Testis (tissue), 5 donors: ENCODE measurements at regions of chr7 and their contacts with region 1.

Region 1: GRCh38 chr7:35983626-35984025 is 169.4 kb upstream of the EEPD1 start:
- DNase-seq: no peak
- H3K4me3 ChIP-seq: no peak overlapping the region
- H3K27ac ChIP-seq: no peak overlapping the region
- H3K4me1 ChIP-seq: no peaks in the 10 kb centered on the region
- H3K27me3 ChIP-seq: no peaks in the 10 kb centered on the region
- CTCF ChIP-seq: no peak
- POLR2A ChIP-seq: no peak

Region 2: GRCh38 chr7:36228039-36228438 is 244.4 kb after region 1 on chr7:
- intact Hi-C with region 1: loop called (anchors 2 kb)
- DNase-seq: no peak
- H3K4me3 ChIP-seq: no peak overlapping the region
- H3K27ac ChIP-seq: peak overlapping the region; percentile 65 to 68
- H3K4me1 ChIP-seq: peaks cover 24% of the 10 kb centered on the region
- H3K27me3 ChIP-seq: no peaks in the 10 kb centered on the region
- CTCF ChIP-seq: no peak
- POLR2A ChIP-seq: no peak

Region 3: DNA sequence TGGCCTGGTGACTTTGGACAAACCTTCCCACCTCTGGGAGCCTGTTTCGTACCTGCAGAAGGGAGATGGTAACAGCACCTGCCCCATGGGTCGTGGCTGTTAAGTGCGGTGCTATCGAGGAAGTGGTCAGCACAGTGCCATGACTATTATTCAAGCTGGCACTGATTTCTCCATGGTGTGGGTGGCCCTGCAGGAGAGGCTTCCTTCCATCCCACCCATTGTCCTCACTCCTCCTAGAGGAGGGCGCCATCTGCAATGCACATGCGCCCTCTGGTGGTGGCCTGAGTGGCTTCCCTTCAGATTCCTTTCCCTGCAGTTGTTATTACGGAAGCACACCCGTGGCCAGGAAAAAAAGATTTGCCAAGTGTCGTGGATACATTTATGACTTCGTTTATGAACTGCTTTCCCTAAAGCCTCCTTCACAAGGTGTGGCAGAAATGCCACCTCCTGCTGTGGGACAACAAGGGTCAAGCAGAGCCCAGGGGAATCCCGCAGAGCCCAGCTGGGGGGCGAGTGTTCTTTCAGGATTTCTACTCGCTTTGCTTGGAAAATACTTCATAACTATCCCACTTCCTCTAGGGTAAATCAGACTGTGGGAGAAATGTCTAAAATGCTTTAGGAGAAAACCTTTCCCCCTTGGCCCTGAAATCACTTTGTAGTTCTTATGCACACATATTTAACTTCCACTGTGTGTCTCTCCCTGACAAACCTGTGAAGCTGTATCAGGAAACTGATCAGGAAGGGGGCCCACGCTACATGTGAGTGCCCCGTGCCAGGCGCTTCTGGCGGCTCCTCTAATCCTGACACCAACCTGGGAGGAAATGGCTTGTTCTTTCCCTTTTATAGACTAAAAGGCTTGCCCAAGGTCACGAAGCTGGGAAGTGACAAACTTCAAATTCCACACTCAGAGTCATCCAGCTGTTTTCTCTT is 308.0 kb after region 1 on chr7:
- intact Hi-C with region 1: loop called (anchors 5 kb)
- DNase-seq: peak; percentile 92
- H3K4me3 ChIP-seq: no peak overlapping the region
- H3K27ac ChIP-seq: peak overlapping the region; percentile 82 to 85
- H3K4me1 ChIP-seq: peaks cover 8% of the 10 kb centered on the region
- H3K27me3 ChIP-seq: no peaks in the 10 kb centered on the region
- CTCF ChIP-seq: peak; percentile 95 to 98 (median 98)
- POLR2A ChIP-seq: no peak

Region 4: DNA sequence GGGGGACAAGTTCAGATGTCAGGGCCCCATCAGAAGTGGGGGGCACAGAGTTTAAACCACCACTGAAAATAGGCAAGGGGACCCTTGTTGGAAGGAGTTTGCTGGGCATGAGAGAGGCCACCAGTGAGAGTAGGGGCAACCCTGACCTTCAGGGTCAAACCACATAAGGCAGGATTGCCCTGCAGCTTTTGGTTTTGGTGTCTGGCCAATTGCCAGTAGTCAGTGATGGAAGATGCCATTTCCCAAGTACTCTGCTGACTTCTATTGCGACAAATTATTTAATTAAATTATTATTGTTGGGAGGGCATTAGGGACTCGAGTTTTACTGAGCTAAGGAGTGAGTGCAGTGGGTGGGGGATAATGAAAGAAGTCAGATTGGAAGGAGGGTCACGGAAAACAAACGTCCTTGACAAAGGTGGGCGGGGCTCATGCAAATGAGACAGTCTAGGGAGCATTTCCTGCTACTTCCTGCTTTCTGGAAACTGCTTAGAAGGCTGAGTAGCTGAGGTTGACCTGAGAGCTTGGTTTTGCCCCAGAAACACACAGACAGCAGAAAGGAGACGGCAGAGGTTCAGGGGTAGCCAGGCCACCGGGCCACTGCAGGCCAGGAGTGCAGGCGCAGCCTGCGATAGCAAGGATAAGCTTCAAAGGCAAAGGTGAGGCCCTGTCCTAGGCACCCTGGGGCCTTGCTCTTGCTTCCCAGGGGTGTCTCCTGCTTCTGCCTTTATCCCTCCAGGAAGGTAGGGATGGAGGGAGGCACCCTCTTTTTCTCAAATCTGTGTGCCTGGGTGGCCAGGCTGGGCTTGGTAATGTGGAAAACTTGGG is 331.9 kb after region 1 on chr7:
- intact Hi-C with region 1: loop called (anchors 5 kb)
- DNase-seq: no peak
- H3K4me3 ChIP-seq: no peak overlapping the region
- H3K27ac ChIP-seq: no peak overlapping the region
- H3K4me1 ChIP-seq: no peaks in the 10 kb centered on the region
- H3K27me3 ChIP-seq: no peaks in the 10 kb centered on the region
- CTCF ChIP-seq: no peak
- POLR2A ChIP-seq: no peak